Esophagus squamous epithelium (tissue), 5 donors: ENCODE measurements at regions of chr17 and their contacts with region 1.

Region 1: DNA sequence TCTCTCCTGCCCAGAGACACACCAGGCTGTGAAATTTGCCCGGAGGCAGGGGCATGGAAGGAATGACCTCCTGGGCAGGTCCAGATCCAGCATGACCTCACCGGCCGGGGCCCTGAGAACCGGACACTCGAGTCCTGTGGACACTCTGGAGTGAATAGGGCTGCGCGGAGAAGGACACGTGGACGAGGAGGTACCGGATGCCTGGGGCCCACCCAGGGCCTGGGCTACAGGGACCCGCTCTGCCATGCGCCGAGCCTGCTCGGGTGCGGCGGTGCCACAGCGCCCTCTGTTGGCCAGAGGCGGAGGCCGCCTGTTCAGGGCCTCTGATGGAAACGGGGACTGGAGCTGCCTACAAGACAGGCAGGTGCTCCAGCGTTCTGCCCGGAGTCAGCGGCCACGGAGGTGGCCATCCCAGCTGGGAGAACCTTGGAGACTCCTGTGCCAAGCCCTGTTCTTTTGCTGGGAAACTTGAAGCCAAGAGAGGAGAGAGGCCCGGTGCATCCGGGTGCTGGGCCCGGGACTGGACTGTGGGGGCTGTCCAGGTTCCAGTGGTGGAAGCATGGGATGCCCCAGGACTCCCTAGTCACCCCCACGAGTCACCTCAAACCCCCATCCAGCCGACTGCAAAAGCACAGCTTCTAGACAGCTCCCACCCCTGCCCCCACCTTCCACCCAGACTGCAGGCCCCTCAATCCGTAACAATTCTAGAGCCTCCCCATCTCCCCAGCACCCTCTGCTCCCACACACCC is 19.3 kb upstream of the NXPH3 start:
- DNase-seq: no peak
- H3K4me3 ChIP-seq: peak overlapping the region in 1 of 4 donors; percentile 30
- H3K27ac ChIP-seq: no peak overlapping the region
- H3K4me1 ChIP-seq: peaks cover 7 to 32% (median 18%) of the 10 kb centered on the region in 3 donors
- H3K27me3 ChIP-seq: peaks cover 0 to 62% (median 0%) of the 10 kb centered on the region in 4 donors
- CTCF ChIP-seq: peak; percentile 86 to 98 (median 96)
- POLR2A ChIP-seq: no peak

Region 2: DNA sequence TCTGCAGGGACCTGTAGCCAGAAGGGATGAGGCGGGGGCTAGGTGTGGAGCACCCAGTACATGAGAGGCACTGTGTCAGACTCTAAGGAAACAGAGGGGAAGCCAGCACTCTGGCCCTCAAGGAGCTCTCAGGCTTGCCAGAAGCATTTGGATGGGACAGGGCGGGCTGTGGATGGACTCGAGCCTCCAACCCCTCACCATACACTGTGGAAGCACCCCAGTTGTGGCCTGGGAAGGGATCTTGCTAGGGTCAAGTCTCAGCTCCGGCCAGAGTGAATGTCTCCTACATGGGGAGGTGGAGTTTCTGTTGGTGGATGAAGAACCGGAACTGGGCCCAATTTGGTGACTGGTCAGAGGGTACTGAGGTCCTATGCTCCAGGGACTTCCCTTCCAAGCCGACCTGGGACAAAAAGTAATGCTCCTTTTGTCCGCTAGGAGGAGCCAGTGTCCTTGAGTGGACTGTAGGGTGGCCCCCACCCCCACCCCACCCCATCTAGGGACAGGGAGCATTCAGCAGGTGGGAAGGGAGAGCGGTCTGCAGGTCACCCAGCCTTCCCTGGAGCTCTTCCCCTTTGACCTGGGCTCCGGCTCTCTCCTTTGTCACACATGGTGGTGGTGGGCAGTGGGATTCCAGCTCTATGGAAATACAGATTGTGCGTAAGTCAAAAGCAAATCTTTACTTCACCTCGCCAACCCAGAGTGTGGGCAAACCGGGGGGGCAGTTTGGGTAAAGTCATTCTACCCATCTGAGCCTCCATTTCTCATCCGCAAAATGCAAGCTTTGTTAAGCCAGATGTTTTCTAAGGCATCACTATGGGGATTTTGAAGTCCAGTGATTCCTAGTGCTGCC is 121.4 kb before region 1 on chr17:
- intact Hi-C with region 1: loop called (anchors 5 kb)
- DNase-seq: no peak
- H3K4me3 ChIP-seq: no peak overlapping the region
- H3K27ac ChIP-seq: no peak overlapping the region
- H3K4me1 ChIP-seq: peaks cover 0 to 6% (median 0%) of the 10 kb centered on the region in 3 donors
- H3K27me3 ChIP-seq: peaks cover 0 to 30% (median 0%) of the 10 kb centered on the region in 4 donors
- CTCF ChIP-seq: peak; percentile 42 to 64 (median 56)
- POLR2A ChIP-seq: no peak

Region 3: DNA sequence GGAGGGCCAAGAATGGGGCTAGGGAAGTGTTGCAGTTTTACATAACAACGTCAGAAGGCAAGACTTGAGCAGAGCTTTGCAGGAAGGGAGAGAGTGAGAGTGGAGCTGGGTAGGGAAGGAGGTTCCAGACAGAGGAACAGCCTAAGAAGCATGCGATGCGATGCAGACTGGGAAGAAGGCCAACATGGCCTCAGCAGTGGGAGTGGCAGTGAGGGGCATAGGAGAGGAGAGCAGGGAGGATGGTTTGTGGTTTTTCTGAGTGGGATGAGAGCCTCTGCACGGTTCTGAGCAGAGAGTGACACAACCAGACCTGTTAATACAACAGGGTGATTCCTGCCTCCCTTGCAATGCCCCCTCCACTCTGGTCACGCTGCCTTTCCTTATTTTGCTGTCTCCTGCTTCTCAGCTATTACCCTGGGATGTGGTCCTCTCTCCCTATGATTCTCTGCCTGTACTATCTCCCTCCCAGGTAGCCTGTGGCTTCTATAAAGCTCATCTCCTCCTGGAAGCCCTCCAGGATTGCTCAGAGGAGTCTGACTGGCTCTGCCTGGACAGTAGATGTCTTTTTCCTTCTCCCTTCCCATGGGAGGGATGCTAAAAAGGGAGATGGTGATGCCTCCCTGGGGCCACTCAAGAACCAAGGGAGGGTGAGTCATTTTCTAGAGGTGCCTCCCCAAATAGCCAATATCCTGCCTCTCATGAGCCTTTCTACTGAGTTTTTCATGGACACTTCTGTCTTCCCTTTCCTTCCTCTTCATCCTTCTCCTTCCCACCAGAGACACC is 100.0 kb before region 1 on chr17:
- intact Hi-C with region 1: no loop called
- DNase-seq: no peak
- H3K4me3 ChIP-seq: no peak overlapping the region
- H3K27ac ChIP-seq: no peak overlapping the region
- H3K4me1 ChIP-seq: no peaks in the 10 kb centered on the region
- H3K27me3 ChIP-seq: peaks cover 0 to 80% (median 0%) of the 10 kb centered on the region in 4 donors
- CTCF ChIP-seq: no peak
- POLR2A ChIP-seq: no peak

Region 4: DNA sequence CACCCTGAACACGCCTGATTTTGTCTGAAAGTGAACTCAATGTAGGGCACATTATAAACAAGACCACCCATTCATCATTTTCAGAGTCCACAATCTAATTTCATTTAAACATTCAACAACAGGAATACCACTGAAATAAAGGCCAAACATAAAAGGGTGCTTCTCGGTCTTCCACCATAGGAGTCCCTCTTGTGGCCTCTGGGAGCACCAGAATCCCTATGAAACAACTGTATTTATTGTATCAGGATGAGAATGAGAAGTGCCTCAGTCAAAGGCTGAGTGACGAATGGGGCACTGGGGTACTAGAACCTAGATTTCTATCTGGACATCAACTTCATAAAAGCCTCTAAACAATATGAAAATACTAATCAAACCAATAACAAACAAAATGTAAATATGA is 59.7 kb after region 1 on chr17:
- intact Hi-C with region 1: no loop called
- DNase-seq: no peak
- H3K4me3 ChIP-seq: no peak overlapping the region
- H3K27ac ChIP-seq: peak overlapping the region in 3 of 4 donors; percentile 50 to 76 (median 61)
- H3K4me1 ChIP-seq: peaks cover 0 to 50% (median 21%) of the 10 kb centered on the region in 3 donors
- H3K27me3 ChIP-seq: no peaks in the 10 kb centered on the region
- CTCF ChIP-seq: peak in 2 of 6 experiments; percentile 8 to 17
- POLR2A ChIP-seq: no peak